WTC11 (cell line): ENCODE measurements at regions of chr19 and their contacts with region 1.

Region 1: GRCh38 chr19:54674021-54674617 is 11.3 kb downstream of the LILRB4 start:
- DNase-seq: no peak
- ATAC-seq: no peak
- H3K4me3 Mint-ChIP-seq: no peak overlapping the region
- H3K27ac Mint-ChIP-seq: no peak overlapping the region
- H3K4me1 Mint-ChIP-seq: peaks cover 2% of the 10 kb centered on the region; the same call in 1 of the 2 replicates
- H3K27me3 Mint-ChIP-seq: no peaks in the 10 kb centered on the region; the same call in 1 of the 2 replicates
- CTCF ChIP-seq: peak; percentile 46; the same call in 1 of the 2 replicates

Region 2: GRCh38 chr19:54481322-54481930 is 192.7 kb before region 1 on chr19:
- CTCF ChIA-PET with region 1: interaction called, 12 read pairs
- POLR2A ChIA-PET with region 1: no interaction called
- DNase-seq: peak; percentile 76
- ATAC-seq: peak; percentile 78
- H3K4me3 Mint-ChIP-seq: peak overlapping the region; percentile 20; the same call in 1 of the 2 replicates
- H3K27ac Mint-ChIP-seq: no peak overlapping the region
- H3K4me1 Mint-ChIP-seq: peaks cover 9% of the 10 kb centered on the region
- H3K27me3 Mint-ChIP-seq: peaks cover 32% of the 10 kb centered on the region
- CTCF ChIP-seq: peak; percentile 55; the same call in 1 of the 2 replicates

Region 3: DNA sequence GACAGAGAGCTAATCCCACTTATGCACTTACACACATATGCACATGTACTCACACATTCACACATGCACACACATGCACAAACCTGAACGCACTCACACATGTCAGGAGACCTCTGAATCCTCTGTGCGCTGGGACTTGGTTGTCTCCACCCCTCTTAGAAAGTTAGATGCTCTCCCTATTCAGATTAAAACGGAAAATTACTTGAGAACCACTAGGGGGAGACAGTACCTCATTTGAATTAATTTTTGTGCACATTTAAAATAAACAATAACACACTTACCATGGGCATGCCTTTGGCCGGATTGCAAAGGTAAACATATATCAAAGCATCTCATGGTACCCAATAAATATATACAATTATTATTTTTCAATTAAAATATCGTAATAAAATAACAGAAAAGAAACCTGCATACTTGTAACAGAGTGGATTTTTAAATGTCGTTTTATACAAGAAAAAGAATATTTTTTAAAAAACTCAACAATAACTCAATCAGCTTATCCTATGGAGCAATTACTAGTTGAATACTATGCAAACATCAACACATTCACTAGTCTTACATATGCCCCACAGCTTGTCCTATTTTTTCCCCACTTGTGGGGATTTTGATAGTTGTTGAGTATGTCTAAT is 20.8 kb before region 1 on chr19:
- CTCF ChIA-PET with region 1: interaction called, 25 read pairs
- POLR2A ChIA-PET with region 1: no interaction called
- DNase-seq: no peak
- ATAC-seq: no peak
- H3K4me3 Mint-ChIP-seq: no peak overlapping the region
- H3K27ac Mint-ChIP-seq: no peak overlapping the region
- H3K4me1 Mint-ChIP-seq: no peaks in the 10 kb centered on the region
- H3K27me3 Mint-ChIP-seq: peaks cover 4% of the 10 kb centered on the region
- CTCF ChIP-seq: peak; percentile 38; the same call in 1 of the 2 replicates